ENCODE measurements at regions of chr1 and their contacts with region 1.

Region 1: GRCh38 chr1:183331091-183331742 is 87.0 kb downstream of the NMNAT2 start:
- DNase-seq: no peak
- ATAC-seq: no peak
- H3K4me3 ChIP-seq: no peak overlapping the region
- H3K27ac ChIP-seq: no peak overlapping the region
- H3K4me1 ChIP-seq: no peaks in the 10 kb centered on the region
- H3K27me3 ChIP-seq: no peaks in the 10 kb centered on the region
- CTCF ChIP-seq: no peak

Region 2: GRCh38 chr1:183039985-183040447 is 291.2 kb before region 1 on chr1:
- CTCF ChIA-PET with region 1: no interaction called
- POLR2A ChIA-PET with region 1: no interaction called
- intact Hi-C with region 1: no loop called
- DNase-seq: no peak
- ATAC-seq: no peak
- H3K4me3 ChIP-seq: no peak overlapping the region
- H3K27ac ChIP-seq: peak overlapping the region; percentile 4; the same call in 1 of the 2 replicates
- H3K4me1 ChIP-seq: peaks cover 24% of the 10 kb centered on the region
- H3K27me3 ChIP-seq: no peaks in the 10 kb centered on the region
- CTCF ChIP-seq: no peak

Region 3: DNA sequence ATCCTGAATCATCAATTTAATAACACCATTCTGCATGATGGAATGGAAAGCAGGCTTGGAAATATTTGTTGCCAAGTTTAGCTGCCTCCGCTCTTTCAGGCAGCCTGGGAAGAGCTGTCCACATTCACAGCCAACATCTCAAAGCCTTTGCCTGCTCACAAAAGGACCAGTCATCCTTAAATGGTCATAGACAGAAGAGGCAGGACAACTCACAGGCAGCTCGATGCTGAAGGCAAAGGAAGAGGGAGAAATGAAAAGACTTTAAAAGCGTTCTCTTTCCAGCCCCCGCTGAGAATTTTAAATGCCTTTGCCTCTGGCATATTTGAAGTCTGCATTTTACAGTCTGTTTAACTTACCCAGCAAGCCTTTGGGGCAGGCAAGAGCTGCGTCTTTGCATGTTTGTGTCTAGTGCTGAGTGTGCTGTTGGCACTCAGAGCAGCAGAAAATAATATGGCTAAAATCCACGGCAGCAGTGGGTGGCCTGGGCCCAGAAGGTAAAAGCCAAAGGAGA is 18.0 kb after region 1 on chr1:
- CTCF ChIA-PET with region 1: no interaction called
- POLR2A ChIA-PET with region 1: interaction called, 32 read pairs
- intact Hi-C with region 1: no loop called
- DNase-seq: no peak
- ATAC-seq: no peak
- H3K4me3 ChIP-seq: no peak overlapping the region
- H3K27ac ChIP-seq: no peak overlapping the region
- H3K4me1 ChIP-seq: no peaks in the 10 kb centered on the region
- H3K27me3 ChIP-seq: no peaks in the 10 kb centered on the region
- CTCF ChIP-seq: no peak

Measured in PC-3 (cell line).